ENCODE measurements at regions of chr4 and their contacts with region 1.

Region 1: DNA sequence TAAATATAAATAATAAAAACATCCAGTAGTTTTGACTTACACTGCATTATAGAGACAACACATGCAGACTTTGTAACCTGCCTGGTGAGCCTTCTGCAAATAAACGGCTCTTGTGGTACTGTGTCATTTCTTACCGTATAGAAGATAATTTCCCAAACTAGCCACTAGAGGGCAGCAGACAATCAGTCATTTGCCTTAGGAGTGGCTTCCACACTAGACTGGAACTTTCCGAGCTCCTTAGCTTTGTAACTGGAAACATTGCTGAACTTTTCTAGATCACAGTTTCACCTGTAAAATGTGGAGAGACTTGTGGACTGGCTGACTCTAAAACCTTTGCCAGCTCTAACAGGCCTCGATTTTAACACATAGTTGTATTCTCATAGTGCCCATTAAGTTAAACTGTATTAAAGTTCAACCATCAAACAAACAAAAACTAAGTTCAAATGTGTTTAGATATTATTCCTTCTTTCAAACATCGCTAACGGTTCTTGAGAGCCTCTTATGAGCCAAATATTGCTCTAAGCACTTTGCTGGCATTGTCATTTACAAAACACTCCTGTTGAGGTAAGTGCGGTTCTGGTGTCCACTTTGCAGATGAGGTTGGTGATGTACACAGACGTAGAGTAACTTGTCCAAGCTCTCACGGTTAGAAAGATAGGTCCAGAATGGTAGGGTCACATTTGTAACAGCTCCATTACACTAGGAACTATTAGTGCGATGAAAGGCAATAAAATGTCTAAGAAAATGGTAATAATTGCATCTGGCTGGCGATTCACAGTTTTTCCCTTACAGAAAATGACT is 345.5 kb downstream of the ANK2 start:
- DNase-seq: peak in 2 of 5 donors; percentile 64 to 73
- ATAC-seq: peak; percentile 91 to 95 (median 94)
- H3K4me3 ChIP-seq: no peak overlapping the region
- H3K27ac ChIP-seq: peak overlapping the region in 2 of 12 donors; percentile 35 to 46
- H3K4me1 ChIP-seq: peaks cover 0 to 17% (median 0%) of the 10 kb centered on the region in 12 donors
- H3K27me3 ChIP-seq: no peaks in the 10 kb centered on the region
- CTCF ChIP-seq: peak; percentile 70 to 92 (median 88)
- POLR2A ChIP-seq: no peak

Region 2: DNA sequence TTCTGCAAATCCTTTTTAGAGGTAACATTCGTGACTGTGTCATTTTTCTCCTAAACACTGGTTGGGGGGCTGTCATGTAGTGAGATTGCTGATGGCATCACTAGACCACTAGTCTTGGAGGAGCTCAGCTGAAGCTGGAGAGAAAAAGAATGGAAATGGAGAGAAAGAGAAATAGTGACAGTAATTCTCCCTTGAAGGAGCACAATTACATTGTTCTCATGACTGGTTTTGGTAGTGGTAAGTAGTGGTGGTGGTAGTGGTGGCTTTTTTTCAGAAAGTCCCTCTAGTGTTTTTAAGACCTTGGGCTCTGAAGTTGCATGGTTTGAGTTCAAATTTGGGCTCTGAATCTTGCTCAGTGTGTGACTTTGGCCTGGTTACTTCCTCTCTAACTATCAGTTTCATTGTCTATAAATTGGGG is 658.2 kb before region 1 on chr4:
- intact Hi-C with region 1: no loop called
- DNase-seq: no peak
- ATAC-seq: no peak
- H3K4me3 ChIP-seq: no peak overlapping the region
- H3K27ac ChIP-seq: no peak overlapping the region
- H3K4me1 ChIP-seq: peaks cover 0 to 4% (median 0%) of the 10 kb centered on the region in 12 donors
- H3K27me3 ChIP-seq: no peaks in the 10 kb centered on the region
- CTCF ChIP-seq: no peak
- POLR2A ChIP-seq: no peak

Region 3: DNA sequence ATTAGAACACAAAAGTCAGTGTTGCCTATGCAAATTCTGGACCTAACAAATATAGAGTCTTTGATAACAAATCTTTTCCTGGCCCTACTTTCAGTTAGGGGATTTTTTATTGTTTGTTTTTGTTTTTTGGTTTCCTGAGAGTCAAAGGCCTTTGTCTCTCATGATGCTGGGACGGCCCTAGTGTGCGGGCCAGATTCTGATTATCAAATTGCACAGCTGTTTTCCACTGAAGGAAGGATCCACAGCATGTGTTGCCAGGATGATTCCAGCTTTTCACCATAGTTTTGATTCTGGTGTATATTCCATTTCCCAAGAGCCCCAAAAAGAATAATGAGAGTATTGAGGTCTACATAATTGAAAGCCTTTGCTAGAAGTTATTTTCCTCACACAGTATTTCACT is 118.5 kb after region 1 on chr4:
- intact Hi-C with region 1: loop called in 1 of 10 experiments (anchors 10 kb)
- DNase-seq: no peak
- ATAC-seq: no peak
- H3K4me3 ChIP-seq: no peak overlapping the region
- H3K27ac ChIP-seq: no peak overlapping the region
- H3K4me1 ChIP-seq: peaks cover 0 to 10% (median 0%) of the 10 kb centered on the region in 12 donors
- H3K27me3 ChIP-seq: no peaks in the 10 kb centered on the region
- CTCF ChIP-seq: no peak
- POLR2A ChIP-seq: no peak

Region 4: DNA sequence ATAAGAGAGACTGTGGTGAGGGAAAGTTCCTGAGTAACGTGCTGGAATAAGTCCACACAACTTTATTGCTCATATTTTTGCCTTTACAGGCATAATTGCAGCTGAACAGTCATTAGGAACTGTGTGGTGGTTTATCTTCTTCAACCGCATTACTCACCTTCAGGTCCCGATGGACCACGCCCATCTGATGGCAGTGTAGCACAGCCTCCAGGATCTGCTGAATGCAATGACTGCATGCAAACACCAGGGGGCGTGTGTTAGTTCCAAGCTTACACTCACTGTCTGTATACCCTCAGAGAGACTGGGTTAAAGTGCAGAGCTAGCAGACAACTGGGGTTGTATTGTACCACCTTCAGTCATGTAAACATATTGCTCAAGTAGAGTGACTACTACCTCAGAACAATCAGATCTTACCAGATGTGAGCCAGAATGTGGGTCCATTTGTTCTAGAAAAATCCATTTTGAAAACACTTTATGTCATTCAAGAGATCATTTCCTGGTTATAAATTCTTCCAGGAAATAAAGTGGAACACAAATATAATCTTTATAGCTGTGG is 152.6 kb after region 1 on chr4:
- intact Hi-C with region 1: loop called in 5 of 10 experiments (anchors 10 kb)
- DNase-seq: peak; percentile 83 to 90 (median 86)
- ATAC-seq: peak; percentile 94 to 99 (median 98)
- H3K4me3 ChIP-seq: no peak overlapping the region
- H3K27ac ChIP-seq: peak overlapping the region in 11 of 12 donors; percentile 23 to 75 (median 56)
- H3K4me1 ChIP-seq: peaks cover 0 to 19% (median 12%) of the 10 kb centered on the region in 12 donors
- H3K27me3 ChIP-seq: no peaks in the 10 kb centered on the region
- CTCF ChIP-seq: peak; percentile 91 to 99 (median 97)
- POLR2A ChIP-seq: no peak

Region 5: GRCh38 chr4:113692809-113693411 is 298.0 kb after region 1 on chr4:
- intact Hi-C with region 1: no loop called
- DNase-seq: no peak
- ATAC-seq: peak in 1 of 4 donors; percentile 21
- H3K4me3 ChIP-seq: no peak overlapping the region
- H3K27ac ChIP-seq: peak overlapping the region in 3 of 12 donors; percentile 5 to 40 (median 37)
- H3K4me1 ChIP-seq: peaks cover 0 to 82% (median 48%) of the 10 kb centered on the region in 12 donors
- H3K27me3 ChIP-seq: no peaks in the 10 kb centered on the region
- CTCF ChIP-seq: no peak
- POLR2A ChIP-seq: no peak

Region 6: GRCh38 chr4:113849771-113850170 is 454.8 kb after region 1 on chr4:
- intact Hi-C with region 1: no loop called
- DNase-seq: peak in 4 of 5 donors; percentile 20 to 55 (median 36)
- ATAC-seq: peak in 3 of 4 donors; percentile 47 to 64 (median 56)
- H3K4me3 ChIP-seq: no peak overlapping the region
- H3K27ac ChIP-seq: no peak overlapping the region
- H3K4me1 ChIP-seq: peaks cover 0 to 22% (median 0%) of the 10 kb centered on the region in 12 donors
- H3K27me3 ChIP-seq: no peaks in the 10 kb centered on the region
- CTCF ChIP-seq: peak in 1 of 12 donors; percentile 12
- POLR2A ChIP-seq: no peak

Region 7: DNA sequence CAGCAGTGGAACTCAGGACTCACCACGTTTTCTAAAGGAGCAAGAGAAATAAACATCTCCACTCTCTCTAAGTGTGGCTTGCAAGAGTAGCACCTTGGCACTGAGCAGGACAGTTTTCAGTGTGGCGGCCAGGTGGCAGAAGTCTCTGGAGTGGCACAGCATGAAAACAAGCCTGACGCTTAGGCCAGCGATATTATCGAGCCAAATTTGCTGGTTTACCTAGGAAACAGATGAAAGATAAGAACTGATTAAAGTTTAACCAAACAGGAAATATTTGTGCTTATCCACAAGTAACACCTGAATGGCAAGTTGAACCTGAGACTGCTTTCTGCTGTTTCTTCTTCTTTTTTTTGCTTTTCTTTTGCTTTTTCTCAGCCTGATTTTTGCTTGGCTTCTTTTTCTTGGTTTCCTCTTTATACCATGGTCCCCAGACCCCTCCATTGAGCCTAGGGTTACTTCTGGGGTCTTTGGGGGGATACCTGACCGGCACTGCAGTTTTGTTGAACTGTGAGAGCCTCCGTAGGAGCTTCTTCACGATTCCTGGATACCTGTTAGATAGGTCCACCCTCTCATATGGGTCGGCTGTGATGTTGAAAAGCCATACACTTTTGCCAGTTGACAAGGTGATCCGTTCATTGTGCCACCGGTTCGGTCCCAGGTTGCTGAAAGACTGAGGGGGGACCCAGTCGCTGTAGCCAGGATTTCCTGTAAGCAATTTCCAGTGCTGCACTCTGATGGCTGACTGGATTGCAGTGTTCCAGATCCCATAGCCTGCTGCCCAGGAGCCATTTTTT is 507.3 kb after region 1 on chr4:
- intact Hi-C with region 1: loop called in 6 of 10 experiments (anchors 10 kb)
- DNase-seq: no peak
- ATAC-seq: no peak
- H3K4me3 ChIP-seq: no peak overlapping the region
- H3K27ac ChIP-seq: no peak overlapping the region
- H3K4me1 ChIP-seq: peaks cover 0 to 7% (median 0%) of the 10 kb centered on the region in 12 donors
- H3K27me3 ChIP-seq: no peaks in the 10 kb centered on the region
- CTCF ChIP-seq: no peak
- POLR2A ChIP-seq: no peak

Region 8: GRCh38 chr4:114077610-114078009 is 682.7 kb after region 1 on chr4:
- intact Hi-C with region 1: loop called in 6 of 10 experiments (anchors 5 to 10 kb)
- DNase-seq: no peak
- ATAC-seq: no peak
- H3K4me3 ChIP-seq: no peak overlapping the region
- H3K27ac ChIP-seq: no peak overlapping the region
- H3K4me1 ChIP-seq: no peaks in the 10 kb centered on the region
- H3K27me3 ChIP-seq: no peaks in the 10 kb centered on the region
- CTCF ChIP-seq: no peak
- POLR2A ChIP-seq: no peak

Region 9: DNA sequence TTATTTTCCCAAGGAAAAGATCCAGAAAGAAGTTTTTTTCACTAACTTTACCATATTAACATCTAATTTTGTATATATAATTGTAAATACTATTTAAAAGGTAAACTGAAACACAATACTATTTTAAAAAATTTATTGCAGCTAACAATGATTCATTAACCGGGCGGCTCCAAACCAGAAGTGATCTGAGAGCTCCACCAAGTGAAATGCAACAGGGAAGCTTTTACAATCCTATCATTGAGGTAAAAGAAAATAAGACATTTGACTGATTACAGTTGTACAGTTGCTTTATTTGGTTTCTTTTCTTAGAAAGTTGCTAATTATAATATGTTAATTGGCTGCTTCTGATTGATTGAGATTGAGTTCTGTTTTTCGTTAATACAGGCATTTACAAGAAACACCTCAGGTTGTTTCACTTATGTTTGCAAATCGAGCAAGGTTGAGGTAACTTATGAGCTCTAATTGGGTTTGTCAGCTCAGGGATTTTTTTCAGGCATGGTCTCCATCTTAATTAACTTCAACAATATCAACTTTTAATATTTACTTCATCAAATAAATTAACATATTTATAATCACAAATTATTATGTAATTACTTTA is 983.5 kb after region 1 on chr4:
- intact Hi-C with region 1: loop called in 7 of 10 experiments (anchors 5 to 10 kb)
- DNase-seq: no peak
- ATAC-seq: peak in 2 of 4 donors; percentile 31 to 48
- H3K4me3 ChIP-seq: no peak overlapping the region
- H3K27ac ChIP-seq: no peak overlapping the region
- H3K4me1 ChIP-seq: no peaks in the 10 kb centered on the region
- H3K27me3 ChIP-seq: no peaks in the 10 kb centered on the region
- CTCF ChIP-seq: peak in 10 of 12 donors; percentile 12 to 68 (median 52)
- POLR2A ChIP-seq: no peak

Measured in heart left ventricle (tissue), 16 donors.